A673 (cell line): ENCODE measurements at regions of chr19 and their contacts with region 1.

Region 1: DNA sequence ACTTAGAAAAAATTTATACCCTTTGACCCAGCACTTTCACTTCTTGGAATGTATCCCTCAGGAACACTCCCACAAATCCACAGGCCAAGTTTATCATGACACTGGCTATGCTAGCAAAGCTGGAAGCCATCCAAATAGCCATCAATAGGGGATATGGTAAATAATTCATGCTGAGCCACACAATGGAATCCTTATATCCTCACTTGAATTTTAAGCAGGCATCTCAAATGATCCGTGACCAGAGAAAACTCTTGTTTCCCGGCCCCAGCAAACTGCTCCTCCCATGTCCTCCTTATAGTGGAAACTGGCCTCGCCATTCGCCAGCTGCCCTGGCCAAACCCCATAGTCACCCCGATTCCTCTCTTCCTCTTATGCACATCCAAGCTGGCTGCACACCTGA is 37.6 kb downstream of the GRIK5 start:
- DNase-seq: peak; percentile 93
- H3K4me3 ChIP-seq: no peak overlapping the region
- H3K27ac ChIP-seq: no peak overlapping the region
- H3K4me1 ChIP-seq: peaks cover 10% of the 10 kb centered on the region
- H3K27me3 ChIP-seq: no peaks in the 10 kb centered on the region
- CTCF ChIP-seq: no peak

Region 2: DNA sequence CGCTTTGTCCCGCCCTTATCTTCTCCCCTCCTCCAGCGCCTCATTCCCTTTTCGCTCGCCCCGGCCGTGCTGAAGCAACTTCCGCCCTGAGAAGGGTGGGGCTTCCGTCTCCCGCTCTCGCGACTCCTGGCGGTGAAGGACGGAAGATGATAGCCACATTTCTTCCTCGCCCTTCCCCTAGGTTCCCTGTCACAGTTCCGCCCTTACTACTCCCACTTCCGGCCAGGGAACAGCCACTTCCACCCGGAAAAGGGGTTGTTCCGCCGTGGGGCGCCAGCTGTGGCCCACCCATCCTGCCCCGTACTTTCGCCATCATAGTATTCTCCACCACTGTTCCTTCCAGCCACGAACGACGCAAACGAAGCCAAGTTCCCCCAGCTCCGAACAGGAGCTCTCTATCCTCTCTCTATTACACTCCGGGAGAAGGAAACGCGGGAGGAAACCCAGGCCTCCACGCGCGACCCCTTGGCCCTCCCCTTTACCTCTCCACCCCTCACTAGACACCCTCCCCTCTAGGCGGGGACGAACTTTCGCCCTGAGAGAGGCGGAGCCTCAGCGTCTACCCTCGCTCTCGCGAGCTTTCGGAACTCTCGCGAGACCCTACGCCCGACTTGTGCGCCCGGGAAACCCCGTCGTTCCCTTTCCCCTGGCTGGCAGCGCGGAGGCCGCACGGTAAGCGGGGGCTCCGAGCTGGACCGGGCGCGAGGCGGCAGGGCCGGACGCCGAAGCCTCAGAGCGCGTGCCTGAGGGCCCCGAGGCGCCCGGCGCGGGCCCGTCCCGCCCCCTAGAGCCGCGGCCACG is 172.6 kb before region 1 on chr19 and contains the start of gene RPS19:
- CTCF ChIA-PET with region 1: interaction called, 13 read pairs
- POLR2A ChIA-PET with region 1: no interaction called
- intact Hi-C with region 1: no loop called
- DNase-seq: peak; percentile 99
- H3K4me3 ChIP-seq: peak within 1 kb of the TSS; percentile 87
- H3K27ac ChIP-seq: peak within 1 kb of the TSS; percentile 97
- H3K4me1 ChIP-seq: peaks cover 45% of the 10 kb centered on the region
- H3K27me3 ChIP-seq: no peaks in the 10 kb centered on the region
- CTCF ChIP-seq: peak; percentile 68
- total RNA-seq, gene RPS19: 2,479 and 2,559 TPM in 2 replicates

Region 3: DNA sequence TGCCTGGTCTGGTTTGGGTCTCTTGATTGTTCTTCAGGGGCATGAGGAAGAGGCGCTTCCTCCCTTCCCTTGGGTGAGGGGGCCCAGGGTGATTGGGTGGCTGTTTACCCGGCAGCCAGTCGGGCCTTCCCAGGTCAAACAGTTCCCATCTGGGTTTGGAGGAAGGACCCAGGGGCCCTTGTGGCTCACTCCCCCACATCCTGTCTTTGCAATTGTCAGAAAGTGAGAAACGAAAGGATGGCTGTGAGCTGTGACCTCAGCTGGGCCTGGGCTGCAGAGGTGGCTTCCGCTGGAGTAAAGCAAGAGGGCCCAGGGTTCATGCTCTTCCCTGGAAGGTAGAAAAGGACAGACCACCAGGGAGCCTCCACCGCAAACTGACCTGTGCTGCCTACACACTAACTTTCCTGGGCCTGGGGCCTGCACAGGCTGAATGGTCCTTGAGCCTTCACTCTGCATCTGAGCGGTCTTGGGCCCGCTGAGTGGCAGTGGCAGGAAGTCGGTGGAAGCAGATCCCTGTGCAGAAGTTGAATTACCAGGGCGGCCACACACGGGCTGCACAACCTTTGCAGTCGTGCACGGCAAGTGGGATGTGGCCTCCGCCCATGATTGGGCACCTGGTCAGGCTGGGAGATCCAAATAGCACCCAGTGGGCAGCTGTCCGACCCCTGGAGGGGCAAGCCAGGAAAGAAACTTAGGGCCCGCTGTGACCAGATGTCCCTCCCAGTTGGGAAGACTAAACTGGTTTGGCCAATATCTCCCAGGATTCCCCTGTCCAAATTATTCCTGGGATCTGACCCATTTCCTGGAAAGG is 160.7 kb before region 1 on chr19:
- CTCF ChIA-PET with region 1: no interaction called
- POLR2A ChIA-PET with region 1: no interaction called
- intact Hi-C with region 1: no loop called
- DNase-seq: no peak
- H3K4me3 ChIP-seq: no peak overlapping the region
- H3K27ac ChIP-seq: peak overlapping the region; percentile 56
- H3K4me1 ChIP-seq: peaks cover 22% of the 10 kb centered on the region
- H3K27me3 ChIP-seq: no peaks in the 10 kb centered on the region
- CTCF ChIP-seq: no peak

Region 4: GRCh38 chr19:41883821-41884733 is 148.4 kb before region 1 on chr19:
- CTCF ChIA-PET with region 1: no interaction called
- POLR2A ChIA-PET with region 1: no interaction called
- intact Hi-C with region 1: loop called (anchors 5 kb)
- DNase-seq: peak; percentile 99
- H3K4me3 ChIP-seq: peak overlapping the region; percentile 84
- H3K27ac ChIP-seq: peak overlapping the region; percentile 91
- H3K4me1 ChIP-seq: peaks cover 65% of the 10 kb centered on the region
- H3K27me3 ChIP-seq: no peaks in the 10 kb centered on the region
- CTCF ChIP-seq: no peak

Region 5: DNA sequence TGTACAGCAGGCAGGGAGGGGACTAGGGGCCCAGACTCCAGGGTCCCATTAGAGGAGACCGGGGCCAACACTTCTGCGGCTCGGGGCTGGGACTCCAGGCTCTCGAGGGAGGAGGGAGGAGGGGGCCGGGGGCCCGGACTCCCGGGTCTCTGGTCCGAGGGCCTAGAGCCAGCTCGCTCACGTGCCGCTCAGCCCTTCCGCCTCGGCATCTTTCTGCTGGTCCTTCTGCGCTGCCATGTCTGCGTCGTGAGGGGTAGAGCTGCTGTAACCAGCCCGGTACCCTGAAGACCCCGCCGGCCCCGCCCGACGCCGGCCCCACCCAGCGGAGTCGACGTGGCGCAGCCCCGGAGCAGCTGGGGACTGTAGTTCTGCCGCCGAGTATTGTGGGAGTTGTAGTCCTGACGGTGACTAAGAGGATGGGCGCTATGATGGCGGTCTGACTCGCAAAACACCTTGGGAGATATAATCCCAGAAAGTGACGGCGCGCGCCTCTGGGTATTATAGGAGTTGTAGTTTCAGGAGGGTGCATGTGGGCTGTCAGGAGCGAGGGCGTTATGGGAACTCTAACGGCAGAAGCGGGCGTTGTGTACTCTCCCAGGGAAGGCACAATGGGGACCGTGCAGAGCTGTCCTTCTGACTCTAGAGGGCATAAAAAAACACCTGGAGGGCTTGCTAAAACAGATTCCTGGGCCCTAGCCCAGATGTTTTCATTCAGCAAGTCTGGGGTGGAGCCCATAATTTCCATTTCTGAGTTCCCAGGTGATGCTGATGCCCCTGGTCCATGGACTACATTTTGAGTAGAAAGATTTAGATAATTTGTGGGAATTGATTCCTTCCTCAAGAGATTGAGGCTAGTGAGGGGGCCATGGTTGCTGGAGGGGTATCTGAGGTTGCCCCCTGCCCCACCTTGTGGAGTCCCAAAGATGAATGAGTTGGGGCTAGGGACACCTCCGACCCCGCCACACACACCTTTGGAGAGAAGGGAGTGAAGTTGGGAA is 73.1 kb before region 1 on chr19 and contains the start of gene RABAC1:
- CTCF ChIA-PET with region 1: interaction called, 3 read pairs
- POLR2A ChIA-PET with region 1: no interaction called
- intact Hi-C with region 1: loop called (anchors 2 kb)
- DNase-seq: peak; percentile 97
- H3K4me3 ChIP-seq: peak within 1 kb of the TSS; percentile 84
- H3K27ac ChIP-seq: peak within 1 kb of the TSS; percentile 70
- H3K4me1 ChIP-seq: peaks cover 7% of the 10 kb centered on the region
- H3K27me3 ChIP-seq: no peaks in the 10 kb centered on the region
- CTCF ChIP-seq: peak; percentile 32
- total RNA-seq, gene RABAC1: 114 and 124 TPM in 2 replicates

Region 6: DNA sequence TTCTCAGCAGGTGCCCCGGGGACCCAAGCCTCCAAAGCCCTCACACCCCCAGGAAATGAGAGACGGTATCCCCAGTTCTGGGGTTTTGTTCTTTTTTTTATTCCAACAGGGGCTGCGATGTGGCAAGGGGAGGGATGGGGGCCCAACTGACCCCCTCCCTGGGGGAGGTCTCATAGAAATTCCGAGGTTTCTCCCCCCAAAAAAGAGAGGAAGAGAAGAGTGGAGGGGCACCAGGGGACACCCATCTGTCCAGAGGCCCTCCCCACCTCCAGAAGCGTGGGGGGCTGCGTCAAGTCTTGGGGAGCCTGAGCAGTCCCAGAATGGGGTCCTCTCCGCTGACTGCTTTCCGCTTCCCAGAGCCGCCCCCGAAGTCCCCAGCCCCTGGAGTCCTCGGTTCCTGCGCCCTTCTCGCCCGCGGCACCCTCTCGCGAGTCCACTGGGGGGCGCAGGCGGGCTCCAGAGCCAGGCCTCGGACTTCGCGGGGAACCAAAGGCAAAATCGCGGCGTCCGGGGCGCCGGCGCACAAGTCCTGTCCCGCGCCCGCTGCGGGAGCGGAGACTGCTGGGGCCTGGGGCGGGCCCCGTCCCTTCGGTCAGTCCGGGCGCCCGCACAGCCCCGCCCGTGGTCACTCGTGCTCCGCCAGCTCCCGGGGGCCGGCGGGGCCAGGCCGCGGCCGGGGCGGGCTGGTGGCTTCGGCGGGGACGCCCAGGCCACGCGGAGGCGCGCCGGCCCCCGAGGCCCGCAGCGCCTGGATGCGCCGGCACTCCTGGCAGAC is 34.0 kb before region 1 on chr19:
- CTCF ChIA-PET with region 1: interaction called, 6 read pairs
- POLR2A ChIA-PET with region 1: no interaction called
- intact Hi-C with region 1: loop called (anchors 2 kb)
- DNase-seq: peak; percentile 81
- H3K4me3 ChIP-seq: peak overlapping the region; percentile 21
- H3K27ac ChIP-seq: no peak overlapping the region
- H3K4me1 ChIP-seq: peaks cover 12% of the 10 kb centered on the region
- H3K27me3 ChIP-seq: peaks cover 27% of the 10 kb centered on the region
- CTCF ChIP-seq: peak; percentile 86

Region 7: GRCh38 chr19:42048992-42049391 is 16.6 kb after region 1 on chr19:
- CTCF ChIA-PET with region 1: no interaction called
- POLR2A ChIA-PET with region 1: no interaction called
- intact Hi-C with region 1: no loop called
- DNase-seq: no peak
- H3K4me3 ChIP-seq: no peak overlapping the region
- H3K27ac ChIP-seq: no peak overlapping the region
- H3K4me1 ChIP-seq: no peaks in the 10 kb centered on the region
- H3K27me3 ChIP-seq: no peaks in the 10 kb centered on the region
- CTCF ChIP-seq: no peak